Sigmoid colon (tissue), 7 donors: ENCODE measurements at regions of chr17 and their contacts with region 1.

Region 1: GRCh38 chr17:28792877-28793661 is 49.3 kb downstream of the TRAF4 start:
- DNase-seq: no peak
- H3K4me3 ChIP-seq: no peak overlapping the region
- H3K27ac ChIP-seq: no peak overlapping the region
- H3K4me1 ChIP-seq: no peaks in the 10 kb centered on the region
- H3K27me3 ChIP-seq: no peaks in the 10 kb centered on the region
- CTCF ChIP-seq: no peak
- EP300 ChIP-seq: no peak
- POLR2A ChIP-seq: no peak

Region 2: GRCh38 chr17:28828294-28829040 is 35.4 kb after region 1 on chr17:
- intact Hi-C with region 1: loop called (anchors 5 kb)
- DNase-seq: peak; percentile 28
- H3K4me3 ChIP-seq: no peak overlapping the region
- H3K27ac ChIP-seq: no peak overlapping the region
- H3K4me1 ChIP-seq: no peaks in the 10 kb centered on the region
- H3K27me3 ChIP-seq: no peaks in the 10 kb centered on the region
- CTCF ChIP-seq: no peak
- EP300 ChIP-seq: no peak
- POLR2A ChIP-seq: no peak

Region 3: DNA sequence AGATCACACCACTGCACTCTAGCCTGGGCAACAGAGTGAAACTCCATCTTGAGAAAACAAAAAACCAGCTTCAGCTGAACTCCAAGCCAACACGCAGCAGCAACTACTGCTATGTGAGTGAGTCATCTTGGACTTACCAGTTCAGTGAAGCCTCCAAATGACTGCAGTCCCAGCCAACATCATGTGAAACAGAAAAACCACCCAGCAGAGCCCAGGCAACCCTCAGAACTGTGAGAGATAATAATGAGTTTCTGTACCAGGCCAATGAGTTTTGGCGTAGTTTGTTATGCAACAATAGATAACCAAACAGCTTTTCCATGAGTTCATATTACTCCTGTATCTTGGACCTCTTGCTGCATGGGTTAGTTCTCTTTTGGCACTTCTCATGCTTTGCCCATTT is 135.0 kb after region 1 on chr17:
- intact Hi-C with region 1: no loop called
- DNase-seq: no peak
- H3K4me3 ChIP-seq: no peak overlapping the region
- H3K27ac ChIP-seq: no peak overlapping the region
- H3K4me1 ChIP-seq: peaks cover 0 to 25% (median 17%) of the 10 kb centered on the region in 4 donors
- H3K27me3 ChIP-seq: no peaks in the 10 kb centered on the region
- CTCF ChIP-seq: no peak
- EP300 ChIP-seq: no peak
- POLR2A ChIP-seq: no peak